Adrenal gland (tissue), 19 donors: ENCODE measurements at regions of chr11 and their contacts with region 1.

Region 1: GRCh38 chr11:355581-356458 is 13.5 kb upstream of the B4GALNT4 start:
- DNase-seq: peak; percentile 87 to 96 (median 91)
- H3K4me3 ChIP-seq: peak overlapping the region in 2 of 4 donors; percentile 26 to 52
- H3K27ac ChIP-seq: peak overlapping the region; percentile 86 to 100 (median 92)
- H3K4me1 ChIP-seq: peaks cover 9 to 13% of the 10 kb centered on the region in 2 donors
- H3K27me3 ChIP-seq: no peaks in the 10 kb centered on the region
- CTCF ChIP-seq: no peak
- POLR2A ChIP-seq: peak; percentile 31 to 44

Region 2: DNA sequence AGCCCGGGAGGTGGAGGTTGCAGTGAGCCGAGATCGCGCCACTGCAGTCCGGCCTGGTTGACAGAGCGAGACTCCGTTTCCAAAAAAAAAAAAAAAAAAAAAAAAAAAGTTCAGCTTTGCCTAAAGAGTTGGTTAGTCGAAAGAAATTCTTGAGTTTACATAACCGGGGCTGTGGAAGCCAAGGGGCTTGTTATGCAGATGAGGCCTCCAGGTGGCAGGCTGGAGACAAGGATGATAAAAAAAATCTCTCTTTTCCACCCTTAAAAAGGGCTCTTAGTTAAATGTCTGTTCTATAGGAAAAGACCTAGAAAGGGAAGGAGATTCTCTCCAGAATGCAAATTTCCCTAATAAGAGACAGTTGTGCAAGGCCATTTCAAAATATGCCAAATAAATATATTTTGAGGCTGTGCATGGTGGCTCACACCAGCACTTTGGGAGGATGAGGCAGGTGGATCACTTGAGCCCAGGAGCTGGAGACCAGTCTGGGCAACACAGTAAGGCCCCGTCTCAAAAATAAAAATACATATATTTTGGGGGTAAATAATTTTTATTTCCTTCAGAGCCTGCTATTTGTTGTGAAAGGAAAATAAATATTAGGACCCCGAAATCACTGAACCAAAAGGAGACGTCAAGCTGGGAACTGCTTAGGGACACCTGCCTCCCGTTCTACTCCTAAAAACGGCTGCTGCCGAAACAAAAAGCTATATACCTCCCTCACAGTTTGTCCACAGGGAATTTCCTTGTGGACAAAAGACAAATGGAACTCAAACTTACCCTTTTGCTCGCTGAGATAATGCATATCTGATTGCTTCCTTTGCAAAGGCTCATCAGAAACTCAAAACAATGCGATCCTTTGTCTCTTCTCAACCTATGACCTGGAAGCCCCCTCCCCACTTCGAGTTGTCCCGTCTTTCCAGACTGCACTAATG is 50.6 kb before region 1 on chr11:
- intact Hi-C with region 1: loop called in 1 of 2 experiments (anchors 5 kb)
- DNase-seq: peak; percentile 53 to 86 (median 76)
- H3K4me3 ChIP-seq: no peak overlapping the region
- H3K27ac ChIP-seq: peak overlapping the region in 1 of 5 donors; percentile 94
- H3K4me1 ChIP-seq: peaks cover 6 to 15% of the 10 kb centered on the region in 2 donors
- H3K27me3 ChIP-seq: no peaks in the 10 kb centered on the region
- CTCF ChIP-seq: peak; percentile 41 to 86 (median 69)
- POLR2A ChIP-seq: no peak